ENCODE measurements at regions of chr7 and their contacts with region 1.

Region 1: DNA sequence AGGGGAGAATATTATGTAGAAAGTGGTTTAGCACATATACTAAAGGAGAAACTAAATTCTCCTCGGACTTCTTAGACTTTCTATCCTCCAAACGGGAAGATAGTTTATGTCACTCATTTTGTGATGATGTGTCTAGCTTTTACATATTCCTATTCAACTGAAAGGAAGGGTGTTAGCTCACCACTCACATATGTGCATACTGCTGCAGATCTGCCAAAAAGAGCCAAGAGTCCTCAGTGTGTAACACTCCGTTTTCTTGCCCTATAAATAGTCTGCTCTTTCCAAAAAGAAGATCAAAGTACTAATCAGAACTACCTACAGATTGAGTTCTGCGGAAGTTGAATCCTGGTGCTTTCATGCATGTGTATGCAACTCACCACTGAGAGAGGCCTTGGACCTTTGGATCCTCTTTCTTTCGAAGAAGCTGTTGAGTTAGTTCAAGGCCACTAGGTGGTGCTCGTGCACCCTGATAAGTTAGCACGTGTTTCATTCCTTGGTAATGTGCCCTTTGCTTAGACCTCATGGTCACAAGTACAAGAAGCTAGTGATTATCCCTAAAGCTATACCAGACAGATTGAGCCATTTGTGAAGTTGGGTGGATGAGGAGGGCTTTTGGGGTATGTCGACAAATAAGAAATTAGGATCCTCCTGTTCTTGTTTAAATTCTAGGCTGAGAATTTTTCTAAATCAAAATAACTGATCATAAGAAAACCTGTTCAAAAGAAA is 14.1 kb downstream of the YAE1 start:
- DNase-seq: peak; percentile 77
- ATAC-seq: peak; percentile 98
- H3K4me3 ChIP-seq: no peak overlapping the region
- H3K27ac ChIP-seq: no peak overlapping the region
- H3K4me1 ChIP-seq: no peaks in the 10 kb centered on the region
- H3K27me3 ChIP-seq: no peaks in the 10 kb centered on the region
- CTCF ChIP-seq: peak; percentile 73 to 97 (median 80)
- EP300 ChIP-seq: no peak
- POLR2A ChIP-seq: no peak
- RAD21 ChIP-seq: peak; percentile 98

Region 2: GRCh38 chr7:39594988-39595620 is 14.8 kb after region 1 on chr7:
- CTCF ChIA-PET with region 1: interaction called, 7 read pairs
- POLR2A ChIA-PET with region 1: no interaction called
- RAD21 ChIA-PET with region 1: interaction called, 18 read pairs
- SMC1A ChIA-PET with region 1: interaction called, 26 read pairs
- in situ Hi-C with region 1: no loop called
- intact Hi-C with region 1: no loop called
- DNase-seq: no peak
- ATAC-seq: no peak
- H3K4me3 ChIP-seq: no peak overlapping the region
- H3K27ac ChIP-seq: no peak overlapping the region
- H3K4me1 ChIP-seq: no peaks in the 10 kb centered on the region
- H3K27me3 ChIP-seq: no peaks in the 10 kb centered on the region
- CTCF ChIP-seq: no peak
- EP300 ChIP-seq: no peak
- POLR2A ChIP-seq: no peak
- RAD21 ChIP-seq: no peak

Region 3: GRCh38 chr7:39616138-39616537 is 35.8 kb after region 1 on chr7:
- CTCF ChIA-PET with region 1: interaction called, 42 read pairs
- POLR2A ChIA-PET with region 1: no interaction called
- RAD21 ChIA-PET with region 1: interaction called, 32 read pairs
- SMC1A ChIA-PET with region 1: interaction called, 81 read pairs
- in situ Hi-C with region 1: no loop called
- intact Hi-C with region 1: no loop called
- DNase-seq: no peak
- ATAC-seq: no peak
- H3K4me3 ChIP-seq: no peak overlapping the region
- H3K27ac ChIP-seq: no peak overlapping the region
- H3K4me1 ChIP-seq: peaks cover 1% of the 10 kb centered on the region; the same call in 1 of the 2 replicates
- H3K27me3 ChIP-seq: no peaks in the 10 kb centered on the region
- CTCF ChIP-seq: no peak
- EP300 ChIP-seq: no peak
- POLR2A ChIP-seq: no peak
- RAD21 ChIP-seq: no peak

Region 4: DNA sequence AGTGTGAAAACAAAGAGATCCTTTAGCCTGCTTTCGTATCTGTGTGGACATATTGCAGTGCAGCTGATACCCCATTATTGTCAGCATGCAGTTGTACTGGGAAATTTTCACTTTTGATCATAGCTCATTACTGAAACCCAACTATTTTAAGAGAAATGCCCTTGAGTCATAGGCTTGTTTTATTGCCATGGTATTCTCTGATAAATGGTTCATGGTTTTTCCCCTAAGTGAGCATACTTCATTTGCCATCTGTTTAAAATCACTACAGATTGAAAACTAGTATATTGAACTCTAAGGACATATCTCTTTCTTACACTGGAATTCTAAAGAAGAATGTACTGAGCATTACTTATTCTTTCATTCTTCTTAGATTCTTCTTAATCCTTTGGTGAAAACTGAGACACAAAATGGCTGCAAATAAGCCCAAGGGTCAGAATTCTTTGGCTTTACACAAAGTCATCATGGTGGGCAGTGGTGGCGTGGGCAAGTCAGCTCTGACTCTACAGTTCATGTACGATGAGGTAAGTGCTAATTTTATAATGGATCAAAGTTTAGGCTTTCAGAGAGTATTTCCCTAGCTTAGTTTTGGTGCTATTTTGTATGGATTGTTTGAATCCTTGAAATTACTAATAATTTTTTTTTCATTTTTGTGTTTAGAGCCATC is 106.1 kb after region 1 on chr7:
- CTCF ChIA-PET with region 1: interaction called, 9 read pairs
- POLR2A ChIA-PET with region 1: no interaction called
- RAD21 ChIA-PET with region 1: interaction called, 13 read pairs
- SMC1A ChIA-PET with region 1: interaction called, 10 read pairs
- in situ Hi-C with region 1: no loop called
- intact Hi-C with region 1: no loop called
- DNase-seq: peak; percentile 47
- ATAC-seq: peak; percentile 94
- H3K4me3 ChIP-seq: no peak overlapping the region
- H3K27ac ChIP-seq: 0 out of 2 replicates have a peak overlapping the region, but pooled peaks have one; percentile 22
- H3K4me1 ChIP-seq: peaks cover 9% of the 10 kb centered on the region
- H3K27me3 ChIP-seq: no peaks in the 10 kb centered on the region
- CTCF ChIP-seq: no peak
- EP300 ChIP-seq: 0 out of 4 replicates have a peak, but pooled peaks of 1 of the 2 experiments have one; percentile 25
- POLR2A ChIP-seq: no peak
- RAD21 ChIP-seq: no peak

Region 5: DNA sequence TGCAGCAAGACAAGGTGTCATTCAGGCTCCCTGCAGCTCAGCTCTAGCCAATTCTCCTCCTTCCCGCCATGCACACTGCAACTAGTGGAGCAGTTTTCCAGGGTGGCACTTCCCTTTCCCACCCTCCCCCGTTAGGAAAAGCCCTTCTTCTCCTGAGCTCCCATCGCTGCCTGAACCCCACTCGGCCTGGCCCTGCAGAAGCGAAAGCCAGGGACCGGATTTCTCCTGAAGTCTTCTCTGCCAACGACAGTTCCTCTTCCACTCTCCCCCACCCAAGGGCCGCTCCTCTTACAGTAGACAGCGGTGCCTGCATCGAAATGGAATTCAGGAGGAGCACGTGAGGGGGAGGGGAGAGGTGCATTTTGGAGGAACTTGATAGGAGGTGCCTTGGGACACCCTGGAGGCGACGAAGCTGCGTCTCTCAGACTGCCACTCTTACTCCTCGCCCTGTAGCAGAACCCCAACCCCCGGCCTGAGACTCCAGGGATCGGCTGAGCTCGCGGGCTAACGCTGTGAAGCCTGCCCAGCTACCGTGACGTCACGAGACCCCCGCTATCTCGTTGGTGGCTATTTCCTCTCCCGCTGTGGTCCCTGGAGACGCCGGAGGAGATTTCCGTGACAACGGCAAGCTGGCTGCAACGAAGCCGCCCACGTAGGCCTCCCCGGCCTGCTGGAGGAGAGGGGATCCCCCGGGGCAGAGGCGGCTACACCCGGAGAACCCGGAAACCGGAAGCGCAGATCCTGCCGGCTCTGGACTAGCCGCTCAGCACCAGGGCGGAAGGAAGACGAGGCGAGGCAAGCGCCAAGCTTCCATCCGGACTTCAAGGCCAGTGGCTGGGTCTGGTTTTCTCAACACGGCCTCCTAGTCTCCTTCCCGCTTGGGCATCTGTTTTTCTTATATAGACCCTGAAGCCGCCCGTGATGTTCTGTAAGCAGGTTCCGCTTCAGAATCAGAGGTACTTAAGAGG is 152.8 kb after region 1 on chr7:
- CTCF ChIA-PET with region 1: interaction called, 612 read pairs
- POLR2A ChIA-PET with region 1: interaction called, 4 read pairs
- RAD21 ChIA-PET with region 1: interaction called, 410 read pairs
- SMC1A ChIA-PET with region 1: interaction called, 67 read pairs
- in situ Hi-C with region 1: no loop called
- intact Hi-C with region 1: no loop called
- DNase-seq: peak; percentile 95
- ATAC-seq: peak; percentile 93
- H3K4me3 ChIP-seq: peak overlapping the region; percentile 77
- H3K27ac ChIP-seq: peak overlapping the region; percentile 80
- H3K4me1 ChIP-seq: peaks cover 10% of the 10 kb centered on the region
- H3K27me3 ChIP-seq: no peaks in the 10 kb centered on the region
- CTCF ChIP-seq: no peak
- EP300 ChIP-seq: peak; percentile 56 to 79
- POLR2A ChIP-seq: peak; percentile 91
- RAD21 ChIP-seq: peak; percentile 4; the same call in 1 of the 2 replicates

Region 6: DNA sequence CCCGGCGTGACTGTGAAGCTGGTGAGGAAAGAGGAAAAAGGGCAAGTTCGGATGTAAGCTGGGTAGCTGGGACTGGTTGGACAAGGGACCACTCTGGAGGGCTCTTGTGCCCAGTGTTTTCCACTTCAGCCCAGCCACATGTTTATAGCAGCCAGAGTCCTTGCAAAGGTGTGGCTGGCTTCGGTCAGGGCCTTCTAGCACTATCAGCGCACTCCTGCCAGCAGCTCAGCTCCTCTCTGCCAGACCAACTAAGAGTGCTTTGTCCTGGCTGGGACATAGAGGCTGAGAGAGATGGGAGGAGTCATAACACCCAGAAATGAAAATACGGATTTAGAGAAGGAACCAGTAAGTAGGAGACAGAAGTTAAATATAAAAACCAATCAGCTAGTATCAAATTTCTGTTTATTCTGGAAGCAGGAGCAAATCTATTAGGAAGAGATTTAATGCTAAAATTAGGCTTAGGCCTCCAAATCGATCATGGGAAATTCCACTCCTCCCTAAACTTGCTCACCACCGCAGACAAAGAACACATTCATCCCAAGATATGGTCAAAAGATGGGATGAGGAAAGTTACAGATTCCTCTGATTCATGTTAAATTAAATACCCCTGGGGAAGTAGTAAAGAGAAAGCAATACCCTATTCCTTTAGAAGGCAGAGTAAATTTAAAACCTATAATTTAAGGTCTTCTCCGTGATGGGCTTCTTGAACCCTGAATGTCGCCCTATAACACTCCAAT is 178.1 kb after region 1 on chr7:
- CTCF ChIA-PET with region 1: interaction called, 12 read pairs
- POLR2A ChIA-PET with region 1: no interaction called
- RAD21 ChIA-PET with region 1: interaction called, 4 read pairs
- SMC1A ChIA-PET with region 1: interaction called, 5 read pairs
- in situ Hi-C with region 1: no loop called
- intact Hi-C with region 1: no loop called
- DNase-seq: no peak
- ATAC-seq: no peak
- H3K4me3 ChIP-seq: no peak overlapping the region
- H3K27ac ChIP-seq: no peak overlapping the region
- H3K4me1 ChIP-seq: no peaks in the 10 kb centered on the region
- H3K27me3 ChIP-seq: no peaks in the 10 kb centered on the region
- CTCF ChIP-seq: no peak
- EP300 ChIP-seq: no peak
- POLR2A ChIP-seq: no peak
- RAD21 ChIP-seq: no peak

Region 7: GRCh38 chr7:39948956-39949928 is 368.9 kb after region 1 on chr7:
- CTCF ChIA-PET with region 1: no interaction called
- POLR2A ChIA-PET with region 1: no interaction called
- RAD21 ChIA-PET with region 1: no interaction called
- SMC1A ChIA-PET with region 1: interaction called, 13 read pairs
- in situ Hi-C with region 1: no loop called
- intact Hi-C with region 1: loop called (anchors 5 kb)
- DNase-seq: peak; percentile 98
- ATAC-seq: peak; percentile 80
- H3K4me3 ChIP-seq: peak overlapping the region; percentile 93
- H3K27ac ChIP-seq: peak overlapping the region; percentile 98
- H3K4me1 ChIP-seq: peaks cover 9% of the 10 kb centered on the region; the same call in 1 of the 2 replicates
- H3K27me3 ChIP-seq: no peaks in the 10 kb centered on the region
- CTCF ChIP-seq: no peak
- EP300 ChIP-seq: peak in 1 of 2 experiments; percentile 7; a peak in 1 of 4 replicates
- POLR2A ChIP-seq: peak; percentile 98
- RAD21 ChIP-seq: no peak

Region 8: GRCh38 chr7:40833888-40834234 is 1253.5 kb after region 1 on chr7:
- CTCF ChIA-PET with region 1: no interaction called
- POLR2A ChIA-PET with region 1: no interaction called
- RAD21 ChIA-PET with region 1: no interaction called
- SMC1A ChIA-PET with region 1: no interaction called
- in situ Hi-C with region 1: no loop called
- intact Hi-C with region 1: no loop called
- DNase-seq: no peak
- ATAC-seq: peak; percentile 44; the same call in 1 of the 3 replicates
- H3K4me3 ChIP-seq: no peak overlapping the region
- H3K27ac ChIP-seq: no peak overlapping the region
- H3K4me1 ChIP-seq: no peaks in the 10 kb centered on the region
- H3K27me3 ChIP-seq: no peaks in the 10 kb centered on the region
- CTCF ChIP-seq: peak in 1 of 3 experiments; percentile 3; a peak in 1 of 6 replicates
- EP300 ChIP-seq: no peak
- POLR2A ChIP-seq: no peak
- RAD21 ChIP-seq: 0 out of 2 replicates have a peak, but pooled peaks have one; percentile 14

Measured in GM12878 (cell line).